ENCODE measurements at regions of chr11 and their contacts with region 1.

Region 1: GRCh38 chr11:69909561-69910496 is 90.6 kb upstream of the FGF3 start:
- DNase-seq: no peak
- H3K4me3 ChIP-seq: no peak overlapping the region
- CTCF ChIP-seq: peak; percentile 57

Region 2: GRCh38 chr11:69867738-69868493 is 41.9 kb before region 1 on chr11:
- CTCF ChIA-PET with region 1: no interaction called
- POLR2A ChIA-PET with region 1: no interaction called
- DNase-seq: no peak
- H3K4me3 ChIP-seq: no peak overlapping the region
- CTCF ChIP-seq: no peak

Region 3: GRCh38 chr11:70191495-70192140 is 281.8 kb after region 1 on chr11:
- CTCF ChIA-PET with region 1: interaction called, 200 read pairs
- POLR2A ChIA-PET with region 1: no interaction called
- DNase-seq: no peak
- H3K4me3 ChIP-seq: no peak overlapping the region
- CTCF ChIP-seq: peak; percentile 97